Sigmoid colon (tissue), 7 donors: ENCODE measurements at regions of chr10 and their contacts with region 1.

Region 1: DNA sequence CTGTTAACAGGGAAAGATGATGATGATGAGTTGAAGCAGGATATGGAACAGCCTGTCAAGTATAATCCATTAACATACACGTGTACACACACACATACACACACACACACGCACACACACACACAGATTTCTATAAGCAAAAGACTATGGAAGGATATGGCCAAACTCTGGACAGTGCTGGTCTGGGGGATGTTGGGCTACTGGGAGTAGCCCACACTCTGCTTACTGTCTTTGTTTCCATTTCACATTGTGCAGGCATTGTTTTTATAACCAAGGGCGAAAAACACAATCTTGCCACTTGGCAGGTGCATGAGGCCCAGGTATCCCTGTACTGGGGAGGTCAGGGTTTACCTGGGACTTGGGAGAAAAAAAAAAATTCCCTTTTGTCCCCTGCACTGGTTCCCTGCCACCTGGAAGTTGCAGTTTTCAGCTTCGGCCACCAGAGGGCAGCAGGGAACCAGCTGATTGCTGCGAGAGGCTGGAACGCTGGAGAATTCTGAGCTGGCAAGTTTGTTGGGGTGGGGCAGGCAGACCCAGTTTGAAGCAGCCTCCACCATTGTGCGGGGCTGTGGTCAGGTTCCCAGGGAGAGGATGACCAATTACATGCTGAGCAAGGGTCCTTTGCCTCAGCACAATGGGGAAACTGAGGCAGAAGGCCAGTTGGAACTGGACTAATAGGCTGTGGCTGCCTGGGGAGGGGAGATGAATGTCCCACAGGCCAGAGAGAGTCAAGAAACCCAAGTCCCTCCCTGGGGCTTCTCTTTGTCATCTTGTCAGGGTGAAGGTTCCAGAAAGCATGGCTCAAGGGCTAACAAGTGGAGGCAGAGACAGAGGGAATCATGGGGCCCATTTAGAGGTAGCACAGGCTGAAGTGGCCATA is 27.3 kb downstream of the PPIF start:
- DNase-seq: peak; percentile 91
- H3K4me3 ChIP-seq: no peak overlapping the region
- H3K27ac ChIP-seq: peak overlapping the region in 2 of 4 donors; percentile 49 to 53
- H3K4me1 ChIP-seq: peaks cover 2 to 34% (median 26%) of the 10 kb centered on the region in 4 donors
- H3K27me3 ChIP-seq: no peaks in the 10 kb centered on the region
- CTCF ChIP-seq: peak; percentile 96 to 98 (median 96)
- EP300 ChIP-seq: no peak
- POLR2A ChIP-seq: no peak

Region 2: GRCh38 chr10:79244841-79245504 is 129.6 kb before region 1 on chr10:
- intact Hi-C with region 1: no loop called
- DNase-seq: no peak
- H3K4me3 ChIP-seq: peak overlapping the region in 2 of 4 donors; percentile 65 to 69
- H3K27ac ChIP-seq: peak overlapping the region; percentile 76 to 98 (median 94)
- H3K4me1 ChIP-seq: peaks cover 0 to 96% (median 89%) of the 10 kb centered on the region in 4 donors
- H3K27me3 ChIP-seq: no peaks in the 10 kb centered on the region
- CTCF ChIP-seq: no peak
- EP300 ChIP-seq: no peak
- POLR2A ChIP-seq: no peak

Region 3: DNA sequence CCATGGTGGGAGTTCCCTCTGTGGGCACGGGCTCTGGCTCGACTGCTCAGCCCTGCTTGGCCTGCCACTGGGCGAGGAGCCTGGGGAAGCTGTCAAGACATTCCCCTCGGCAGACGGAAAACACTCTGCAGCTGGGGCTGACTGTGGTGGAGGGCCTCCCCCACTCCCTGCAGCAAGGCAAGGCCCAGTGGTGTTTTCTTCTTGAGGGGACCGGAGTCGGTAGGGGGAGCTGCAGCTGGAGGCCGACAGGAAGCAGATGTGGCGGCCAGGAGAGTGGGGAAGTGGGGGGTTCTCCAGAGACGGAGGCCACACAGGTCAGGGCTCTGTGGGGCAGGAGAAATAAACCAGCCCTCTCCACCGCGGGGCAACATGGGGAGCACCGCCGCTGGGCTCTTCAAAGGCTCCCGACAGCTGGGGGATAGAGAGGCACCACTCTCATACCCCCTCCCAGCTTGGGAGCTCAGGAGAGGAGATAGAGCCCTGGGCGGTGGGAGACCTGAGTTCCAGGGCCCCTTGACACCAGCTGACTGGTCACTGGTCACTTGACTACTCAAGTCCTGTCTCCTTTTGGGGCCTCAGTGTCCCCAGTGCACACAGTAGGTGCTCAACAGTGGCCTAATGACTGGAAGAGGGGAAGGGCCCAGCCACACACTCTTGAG is 16.1 kb after region 1 on chr10:
- intact Hi-C with region 1: no loop called
- DNase-seq: peak; percentile 88
- H3K4me3 ChIP-seq: no peak overlapping the region
- H3K27ac ChIP-seq: peak overlapping the region in 2 of 4 donors; percentile 60 to 91
- H3K4me1 ChIP-seq: peaks cover 0 to 93% (median 42%) of the 10 kb centered on the region in 4 donors
- H3K27me3 ChIP-seq: no peaks in the 10 kb centered on the region
- CTCF ChIP-seq: peak in 3 of 4 experiments; percentile 14 to 29 (median 17)
- EP300 ChIP-seq: no peak
- POLR2A ChIP-seq: no peak

Region 4: DNA sequence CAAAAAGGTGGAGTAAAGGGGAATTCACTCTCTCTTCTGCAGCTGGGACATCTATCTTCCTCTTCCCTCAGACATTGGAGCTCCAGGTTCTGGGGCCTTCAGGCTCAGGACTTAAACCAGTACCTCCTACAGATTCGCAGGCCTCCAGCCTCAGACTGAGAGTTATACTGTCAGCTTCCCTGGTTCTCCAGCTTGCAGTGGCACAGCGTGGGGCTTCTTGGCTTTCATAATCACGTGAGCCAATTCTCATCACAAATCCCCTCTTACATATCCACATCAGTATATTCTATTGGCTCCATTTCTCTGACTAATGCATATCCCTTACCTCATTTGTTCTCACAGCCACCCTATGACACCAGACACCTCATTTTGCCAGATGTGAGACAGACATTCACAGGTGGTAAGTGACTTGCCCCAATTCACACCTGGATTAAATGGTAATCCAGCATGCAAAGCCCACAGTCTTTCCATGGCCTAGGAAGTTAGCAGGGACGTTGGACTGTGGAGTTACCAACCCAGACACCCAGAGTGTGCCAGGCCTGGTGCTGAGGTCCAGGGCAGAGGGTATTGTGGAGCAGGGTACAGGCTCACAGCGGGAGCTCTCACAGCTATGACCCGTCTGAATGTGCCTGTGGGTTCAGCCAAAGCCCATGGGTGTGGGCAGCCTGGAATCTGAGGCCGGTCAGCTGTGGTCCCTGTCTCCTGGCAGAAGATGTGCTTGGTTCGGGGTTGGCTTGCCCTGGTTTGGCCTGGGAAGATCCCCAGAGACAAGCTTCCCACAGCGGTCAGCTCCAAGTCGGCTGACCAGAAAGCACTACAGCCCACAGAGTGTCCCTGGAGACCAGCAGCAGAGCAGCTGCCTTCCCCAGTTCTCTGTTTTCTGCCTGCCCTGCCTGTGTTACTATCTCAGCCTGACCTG is 89.3 kb after region 1 on chr10:
- intact Hi-C with region 1: loop called (anchors 1 kb)
- DNase-seq: no peak
- H3K4me3 ChIP-seq: no peak overlapping the region
- H3K27ac ChIP-seq: no peak overlapping the region
- H3K4me1 ChIP-seq: peaks cover 0 to 14% (median 11%) of the 10 kb centered on the region in 4 donors
- H3K27me3 ChIP-seq: no peaks in the 10 kb centered on the region
- CTCF ChIP-seq: no peak
- EP300 ChIP-seq: no peak
- POLR2A ChIP-seq: no peak

Region 5: DNA sequence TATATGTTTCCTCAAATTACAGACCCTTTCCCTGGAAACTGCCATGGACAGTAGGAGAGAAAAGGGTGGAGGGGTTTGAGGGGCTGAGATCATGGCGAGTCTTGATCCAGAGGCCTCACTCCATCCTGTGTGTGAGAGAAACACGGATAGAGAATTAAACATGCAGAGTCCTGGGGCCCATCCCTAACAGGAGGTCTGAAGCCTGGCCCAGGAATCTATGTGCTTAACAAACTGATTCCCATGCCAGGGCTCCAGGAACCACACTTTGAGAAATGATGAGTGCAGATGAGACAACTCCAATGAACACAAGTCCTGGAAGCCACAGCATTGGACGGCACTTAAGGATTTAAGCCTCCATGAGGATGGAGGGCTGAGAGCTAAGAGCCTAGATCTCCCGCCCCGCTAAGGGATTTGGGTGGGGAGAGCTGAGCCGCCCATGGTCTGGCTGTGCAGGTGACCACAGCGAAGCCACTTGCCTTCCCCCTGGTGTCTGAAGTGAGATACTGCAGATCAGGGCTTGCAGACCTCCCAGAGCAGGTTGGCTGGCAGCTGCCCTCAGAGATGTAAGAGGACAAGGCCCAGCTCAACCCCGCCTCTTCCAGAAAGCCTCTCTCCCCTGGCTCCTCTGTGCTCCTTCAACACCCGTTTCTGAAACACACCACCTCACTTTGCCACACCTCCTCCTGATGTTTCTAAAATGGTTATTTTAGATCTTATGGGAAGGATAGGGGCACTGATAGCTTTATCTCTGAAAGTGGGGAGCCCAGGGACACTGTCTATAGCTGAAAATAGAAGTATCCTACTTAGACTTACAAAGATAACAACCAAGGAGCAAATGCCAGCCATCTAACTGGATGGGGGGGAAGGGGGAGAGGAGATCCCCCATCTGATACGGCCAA is 113.0 kb after region 1 on chr10:
- intact Hi-C with region 1: loop called (anchors 5 kb)
- DNase-seq: peak; percentile 83
- H3K4me3 ChIP-seq: no peak overlapping the region
- H3K27ac ChIP-seq: peak overlapping the region; percentile 45 to 77 (median 69)
- H3K4me1 ChIP-seq: peaks cover 0 to 38% (median 27%) of the 10 kb centered on the region in 4 donors
- H3K27me3 ChIP-seq: no peaks in the 10 kb centered on the region
- CTCF ChIP-seq: peak; percentile 42 to 64 (median 54)
- EP300 ChIP-seq: no peak
- POLR2A ChIP-seq: no peak

Region 6: DNA sequence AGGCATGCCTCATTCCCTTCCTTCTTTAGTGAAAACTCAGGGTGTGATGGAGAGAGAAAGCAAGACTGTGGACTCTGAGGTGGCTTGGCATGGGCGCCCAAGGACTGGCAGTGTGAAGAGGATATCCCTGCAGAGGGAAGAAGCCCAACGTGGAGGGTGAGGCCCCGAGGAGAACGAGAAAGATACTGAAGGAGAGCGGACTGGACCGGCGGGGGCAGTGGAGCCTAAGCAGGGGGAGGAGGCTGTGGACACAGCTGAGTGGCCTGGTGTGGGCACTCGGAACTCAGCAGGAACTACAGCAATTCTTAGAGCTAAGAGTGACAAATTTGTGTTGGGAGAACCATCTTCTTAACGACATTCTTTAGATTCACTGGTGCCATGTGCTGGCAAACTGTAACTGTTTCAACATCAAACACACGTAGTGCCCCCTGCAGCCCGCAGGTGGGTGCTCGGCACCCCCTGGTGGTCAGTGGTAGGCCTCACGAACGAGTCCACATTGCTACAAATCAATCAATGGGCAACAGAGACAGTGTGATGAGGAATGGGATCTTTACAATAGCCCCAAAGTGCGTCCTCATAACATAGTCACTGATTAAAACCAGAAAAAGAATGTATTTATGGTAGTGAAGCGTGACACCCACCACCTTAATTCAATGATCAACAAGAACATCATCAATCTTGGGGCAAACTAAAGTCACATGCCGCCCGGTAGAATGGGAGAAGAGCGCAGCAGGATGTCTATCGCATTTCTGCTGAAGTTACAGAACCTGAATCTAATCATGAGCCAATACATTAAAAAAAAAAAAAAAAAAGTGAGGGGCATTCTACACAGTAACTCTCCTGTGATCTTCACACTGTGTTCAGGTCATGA is 234.2 kb after region 1 on chr10:
- intact Hi-C with region 1: loop called (anchors 10 kb)
- DNase-seq: peak; percentile 46
- H3K4me3 ChIP-seq: no peak overlapping the region
- H3K27ac ChIP-seq: no peak overlapping the region
- H3K4me1 ChIP-seq: no peaks in the 10 kb centered on the region
- H3K27me3 ChIP-seq: no peaks in the 10 kb centered on the region
- CTCF ChIP-seq: peak in 2 of 4 experiments; percentile 40 to 41
- EP300 ChIP-seq: no peak
- POLR2A ChIP-seq: no peak

Region 7: GRCh38 chr10:80144067-80144695 is 769.6 kb after region 1 on chr10:
- intact Hi-C with region 1: loop called (anchors 10 kb)
- DNase-seq: no peak
- H3K4me3 ChIP-seq: peak overlapping the region in 2 of 4 donors; percentile 13 to 21
- H3K27ac ChIP-seq: peak overlapping the region in 3 of 4 donors; percentile 17 to 34 (median 27)
- H3K4me1 ChIP-seq: peaks cover 0 to 16% (median 12%) of the 10 kb centered on the region in 4 donors
- H3K27me3 ChIP-seq: peaks cover 0 to 12% (median 8%) of the 10 kb centered on the region in 3 donors
- CTCF ChIP-seq: peak in 1 of 4 experiments; percentile 2
- EP300 ChIP-seq: no peak
- POLR2A ChIP-seq: no peak

Region 8: DNA sequence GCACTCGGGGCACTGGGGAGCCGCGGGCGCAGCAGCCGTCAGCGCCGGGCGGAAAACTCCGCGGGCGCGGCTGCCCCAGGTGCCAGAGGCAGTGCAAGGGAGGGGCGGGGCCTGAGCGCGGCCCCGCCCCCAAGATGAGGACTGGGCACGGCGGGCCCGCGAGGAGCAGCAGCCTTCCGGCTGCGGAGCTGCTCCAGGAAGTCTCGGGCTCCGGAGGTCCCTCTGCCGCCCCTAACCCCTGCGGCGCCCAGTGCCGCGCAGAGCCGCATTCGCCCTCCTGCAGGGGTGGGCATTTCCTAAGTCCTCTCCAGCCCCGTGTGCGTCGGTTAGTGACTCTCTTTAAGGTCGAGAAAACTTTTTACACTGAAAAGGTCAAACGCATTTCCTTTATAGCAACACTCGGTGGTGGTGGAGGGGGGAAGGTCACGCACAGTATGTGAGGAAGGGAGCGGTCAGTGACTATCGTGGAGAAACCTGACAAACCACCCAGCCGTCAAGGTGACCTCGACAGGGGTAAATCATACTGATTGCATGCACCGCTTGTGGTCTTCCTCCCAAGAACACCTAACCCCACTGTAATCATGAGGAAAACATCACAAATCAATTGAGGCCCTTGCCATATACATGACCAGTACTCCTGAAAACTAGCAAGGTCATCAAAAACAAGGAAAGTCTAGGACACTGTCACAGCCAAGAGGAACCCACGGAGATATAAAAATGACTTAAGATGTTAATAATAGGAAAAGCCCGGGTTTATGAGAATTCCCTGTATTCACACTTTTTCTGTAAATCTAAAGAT is 831.1 kb after region 1 on chr10 and contains the start of gene ANXA11:
- intact Hi-C with region 1: loop called (anchors 10 kb)
- DNase-seq: peak; percentile 91
- H3K4me3 ChIP-seq: peak within 1 kb of the TSS; percentile 70 to 93 (median 86)
- H3K27ac ChIP-seq: peak within 1 kb of the TSS; percentile 96 to 99 (median 96)
- H3K4me1 ChIP-seq: peaks cover 0 to 77% (median 63%) of the 10 kb centered on the region in 4 donors
- H3K27me3 ChIP-seq: no peaks in the 10 kb centered on the region
- CTCF ChIP-seq: no peak
- EP300 ChIP-seq: peak in 1 of 4 donors; percentile 3
- POLR2A ChIP-seq: peak; percentile 91 to 95
- total RNA-seq, gene ANXA11: 63.2 to 109 (median 75.7) TPM